ENCODE measurements at regions of chr1 and their contacts with region 1.

Region 1: GRCh38 chr1:16055613-16056520 is 12.3 kb downstream of the CLCNKB start:
- DNase-seq: peak; percentile 94
- ATAC-seq: peak; percentile 94
- H3K4me3 ChIP-seq: no peak overlapping the region
- H3K27ac ChIP-seq: no peak overlapping the region
- H3K4me1 ChIP-seq: no peaks in the 10 kb centered on the region
- H3K27me3 ChIP-seq: no peaks in the 10 kb centered on the region
- CTCF ChIP-seq: peak; percentile 98

Region 2: GRCh38 chr1:16009030-16009709 is 46.7 kb before region 1 on chr1:
- intact Hi-C with region 1: loop called (anchors 5 kb)
- DNase-seq: peak; percentile 88
- ATAC-seq: peak; percentile 83
- H3K4me3 ChIP-seq: no peak overlapping the region
- H3K27ac ChIP-seq: no peak overlapping the region
- H3K4me1 ChIP-seq: peaks cover 16% of the 10 kb centered on the region
- H3K27me3 ChIP-seq: no peaks in the 10 kb centered on the region
- CTCF ChIP-seq: peak; percentile 97